ENCODE measurements at regions of chr2 and their contacts with region 1.

Region 1: GRCh38 chr2:218659258-218659987 is at the starts of genes BCS1L and ZNF142:
- DNase-seq: peak; percentile 98
- H3K4me3 Mint-ChIP-seq: peak within 1 kb of the TSS; percentile 98
- H3K27ac Mint-ChIP-seq: peak within 1 kb of the TSS; percentile 95
- H3K4me1 Mint-ChIP-seq: peaks cover 31% of the 10 kb centered on the region
- H3K27me3 Mint-ChIP-seq: no peaks in the 10 kb centered on the region
- total RNA-seq, gene BCS1L: 92.9 and 94.4 TPM in 2 replicates
- total RNA-seq, gene ZNF142: 59.6 and 60.9 TPM in 2 replicates

Region 2: DNA sequence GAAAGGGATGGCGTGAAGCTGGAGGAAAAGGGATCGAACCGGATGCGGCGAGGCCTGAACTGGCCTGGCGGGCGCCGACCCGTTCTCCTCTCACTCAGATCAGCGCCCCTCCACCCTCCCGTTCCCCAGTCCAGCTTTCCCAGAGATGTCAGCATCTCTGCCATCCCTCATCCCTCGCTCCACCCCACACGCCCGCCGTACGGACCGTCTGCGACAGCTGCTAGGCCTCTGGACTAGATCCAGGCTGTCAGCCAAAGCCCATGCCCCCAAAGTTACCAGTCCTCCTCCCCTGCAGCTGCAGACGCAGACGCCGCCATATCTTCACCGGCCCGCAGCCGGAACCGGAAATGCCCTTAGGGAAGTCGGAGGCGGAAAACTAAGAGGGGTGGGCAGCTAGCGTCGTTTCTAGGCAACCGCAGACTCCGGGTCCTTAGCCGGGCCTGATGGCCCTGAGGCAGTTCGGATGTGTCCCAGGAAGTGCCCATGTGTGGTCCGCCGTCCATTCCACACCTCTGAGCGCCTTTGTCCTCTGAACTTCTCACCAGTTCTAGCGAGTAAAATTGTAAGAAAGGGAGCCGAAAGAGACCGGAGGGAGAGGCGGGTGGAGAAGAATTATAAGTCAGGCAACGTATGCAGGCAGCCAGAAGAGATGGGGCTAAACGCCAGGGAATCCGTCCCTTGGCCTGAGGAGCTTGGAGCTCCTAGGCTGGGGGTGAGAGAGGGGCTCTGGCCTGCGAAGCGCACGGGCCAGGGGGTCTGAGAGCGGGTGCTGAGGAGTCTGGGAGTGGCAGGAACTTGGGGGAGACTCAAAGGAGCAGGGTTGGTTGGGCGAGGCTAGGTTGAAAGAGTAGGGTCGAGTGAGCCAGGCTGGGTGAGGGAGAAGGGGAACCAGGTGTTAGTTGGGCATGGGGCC is 12.5 kb after region 1 on chr2 and contains the starts of genes RNF25 and STK36:
- intact Hi-C with region 1: loop called (anchors 1 kb)
- DNase-seq: peak; percentile 95
- H3K4me3 Mint-ChIP-seq: peak within 1 kb of the TSS; percentile 97
- H3K27ac Mint-ChIP-seq: peak within 1 kb of the TSS; percentile 94
- H3K4me1 Mint-ChIP-seq: peaks cover 22% of the 10 kb centered on the region
- H3K27me3 Mint-ChIP-seq: no peaks in the 10 kb centered on the region
- total RNA-seq, gene RNF25: 23.6 and 28.8 TPM in 2 replicates
- total RNA-seq, gene STK36: 20.2 and 21.3 TPM in 2 replicates

Region 3: DNA sequence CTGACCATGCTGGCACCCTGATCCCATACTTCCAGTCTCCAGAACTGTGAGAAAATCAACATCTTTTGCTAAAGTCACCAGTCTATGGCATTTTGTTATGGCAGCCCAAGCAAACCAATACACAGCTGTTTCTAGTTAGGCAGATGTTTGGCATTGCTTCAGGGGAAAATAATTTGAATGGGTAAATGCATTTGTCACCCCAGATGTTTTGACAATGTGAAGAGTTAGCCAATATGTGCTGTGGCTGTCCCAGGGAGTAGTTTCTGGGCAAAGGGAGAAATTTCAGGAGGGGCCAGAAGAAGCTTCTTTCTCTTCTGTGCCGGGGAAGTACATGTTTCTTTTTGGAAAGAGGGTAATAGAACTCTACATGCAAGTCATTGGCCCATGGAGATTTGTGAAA is 1587.0 kb after region 1 on chr2:
- intact Hi-C with region 1: no loop called
- DNase-seq: no peak
- H3K4me3 Mint-ChIP-seq: no peak overlapping the region
- H3K27ac Mint-ChIP-seq: no peak overlapping the region
- H3K4me1 Mint-ChIP-seq: no peaks in the 10 kb centered on the region
- H3K27me3 Mint-ChIP-seq: no peaks in the 10 kb centered on the region

Measured in activated CD4-positive, alpha-beta T cell treated with anti-CD3 and anti-CD28 coated beads, Interleukin-2, amount 10 ng/mL, durations not matched to agents 24 days and 14 days (primary cell).